ENCODE measurements at regions of chr9 and their contacts with region 1.

Region 1: DNA sequence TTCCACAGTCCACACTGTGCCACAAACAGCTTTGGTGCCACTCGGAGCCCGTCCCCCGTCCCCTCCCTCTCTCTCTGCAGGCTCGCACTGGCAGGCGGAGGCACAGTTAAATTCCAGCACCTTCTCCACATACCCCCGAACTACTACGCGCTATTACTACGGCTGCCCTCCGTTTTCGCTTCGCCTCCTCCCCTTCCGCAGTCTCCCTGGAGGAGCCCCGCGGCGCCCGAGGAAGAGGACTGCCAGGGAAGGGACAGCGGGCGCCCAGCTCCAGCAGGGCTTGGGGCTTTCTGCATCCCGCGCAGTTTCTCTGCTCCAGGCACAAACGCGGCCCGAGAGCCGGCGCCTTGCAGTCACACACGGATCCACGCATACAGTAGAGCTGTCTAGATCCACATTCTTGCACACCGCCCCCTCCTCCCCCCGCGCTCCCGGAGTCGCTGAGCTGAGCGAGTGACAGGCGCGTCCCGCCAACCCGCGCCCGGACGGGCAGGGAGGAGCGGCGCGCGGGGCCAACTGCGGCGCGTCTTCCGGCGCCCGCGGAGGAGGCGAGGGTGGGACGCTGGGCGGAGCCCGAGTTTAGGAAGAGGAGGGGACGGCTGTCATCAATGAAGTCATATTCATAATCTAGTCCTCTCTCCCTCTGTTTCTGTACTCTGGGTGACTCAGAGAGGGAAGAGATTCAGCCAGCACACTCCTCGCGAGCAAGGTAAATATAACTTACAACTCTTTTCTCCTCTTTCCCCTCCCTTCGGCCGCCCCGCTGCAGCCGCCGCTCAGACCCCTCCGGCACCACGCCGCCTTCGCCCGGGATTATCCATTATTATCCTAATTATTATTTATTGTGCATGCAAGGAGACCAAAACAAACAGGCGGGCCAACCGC is at the start of gene SMARCA2:
- DNase-seq: peak; percentile 98
- H3K4me3 ChIP-seq: peak within 1 kb of the TSS; percentile 63 to 86 (median 86)
- H3K27ac ChIP-seq: peak within 1 kb of the TSS; percentile 49
- H3K4me1 ChIP-seq: peaks cover 21% of the 10 kb centered on the region
- H3K27me3 ChIP-seq: peaks cover 2 to 6% of the 10 kb centered on the region in 2 experiments
- CTCF ChIP-seq: no peak
- POLR2A ChIP-seq: peak; percentile 49
- total RNA-seq, gene SMARCA2: 79.9 TPM in 2 replicates

Region 2: GRCh38 chr9:2026220-2026997 is 11.5 kb after region 1 on chr9:
- CTCF ChIA-PET with region 1: interaction called, 13 read pairs
- POLR2A ChIA-PET with region 1: no interaction called
- dilution Hi-C with region 1: no loop called
- intact Hi-C with region 1: loop called (anchors 1 kb)
- DNase-seq: peak; percentile 88
- H3K4me3 ChIP-seq: peak overlapping the region in 1 of 3 experiments; percentile 41
- H3K27ac ChIP-seq: peak overlapping the region; percentile 96
- H3K4me1 ChIP-seq: peaks cover 45% of the 10 kb centered on the region
- H3K27me3 ChIP-seq: no peaks in the 10 kb centered on the region
- CTCF ChIP-seq: no peak
- POLR2A ChIP-seq: no peak

Region 3: GRCh38 chr9:2087500-2088313 is 72.8 kb after region 1 on chr9:
- CTCF ChIA-PET with region 1: interaction called, 10 read pairs
- POLR2A ChIA-PET with region 1: no interaction called
- dilution Hi-C with region 1: no loop called
- intact Hi-C with region 1: loop called (anchors 1 kb)
- DNase-seq: peak; percentile 32
- H3K4me3 ChIP-seq: no peak overlapping the region
- H3K27ac ChIP-seq: no peak overlapping the region
- H3K4me1 ChIP-seq: peaks cover 10% of the 10 kb centered on the region
- H3K27me3 ChIP-seq: no peaks in the 10 kb centered on the region
- CTCF ChIP-seq: peak; percentile 54 to 58
- POLR2A ChIP-seq: no peak

Region 4: GRCh38 chr9:2241836-2242741 is 227.2 kb after region 1 on chr9:
- CTCF ChIA-PET with region 1: no interaction called
- POLR2A ChIA-PET with region 1: no interaction called
- dilution Hi-C with region 1: no loop called
- intact Hi-C with region 1: loop called (anchors 1 kb)
- DNase-seq: peak; percentile 87
- H3K4me3 ChIP-seq: peak overlapping the region; percentile 31 to 67 (median 36)
- H3K27ac ChIP-seq: no peak overlapping the region
- H3K4me1 ChIP-seq: peaks cover 14% of the 10 kb centered on the region
- H3K27me3 ChIP-seq: peaks cover 0 to 2% of the 10 kb centered on the region in 2 experiments
- CTCF ChIP-seq: no peak
- POLR2A ChIP-seq: peak; percentile 77

Region 5: DNA sequence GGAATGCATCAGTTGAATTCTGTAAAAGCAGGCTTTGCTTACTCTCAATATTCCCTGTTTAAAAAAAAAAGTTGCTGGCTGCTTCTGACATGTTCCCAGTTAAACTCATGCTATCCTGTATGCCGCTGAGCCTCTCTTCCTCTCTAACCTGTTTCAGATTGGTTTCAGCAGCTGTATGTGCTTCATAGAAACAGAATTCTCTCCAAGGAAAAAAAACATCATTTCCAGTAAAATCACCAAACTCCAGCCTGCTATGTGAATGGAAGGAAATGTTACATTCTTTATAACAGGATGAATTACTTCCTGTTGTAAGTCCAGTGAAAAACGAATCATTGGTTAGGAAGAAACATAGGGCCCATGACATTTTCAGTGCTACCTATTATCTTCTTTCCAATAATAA is 676.7 kb after region 1 on chr9:
- CTCF ChIA-PET with region 1: no interaction called
- POLR2A ChIA-PET with region 1: no interaction called
- dilution Hi-C with region 1: no loop called
- intact Hi-C with region 1: loop called (anchors 5 kb)
- DNase-seq: peak; percentile 88
- H3K4me3 ChIP-seq: no peak overlapping the region
- H3K27ac ChIP-seq: peak overlapping the region; percentile 35
- H3K4me1 ChIP-seq: peaks cover 23% of the 10 kb centered on the region
- H3K27me3 ChIP-seq: no peaks in the 10 kb centered on the region
- CTCF ChIP-seq: no peak
- POLR2A ChIP-seq: no peak